Psoas muscle (tissue), 8 donors: ENCODE measurements at regions of chr9 and their contacts with region 1.

Region 1: DNA sequence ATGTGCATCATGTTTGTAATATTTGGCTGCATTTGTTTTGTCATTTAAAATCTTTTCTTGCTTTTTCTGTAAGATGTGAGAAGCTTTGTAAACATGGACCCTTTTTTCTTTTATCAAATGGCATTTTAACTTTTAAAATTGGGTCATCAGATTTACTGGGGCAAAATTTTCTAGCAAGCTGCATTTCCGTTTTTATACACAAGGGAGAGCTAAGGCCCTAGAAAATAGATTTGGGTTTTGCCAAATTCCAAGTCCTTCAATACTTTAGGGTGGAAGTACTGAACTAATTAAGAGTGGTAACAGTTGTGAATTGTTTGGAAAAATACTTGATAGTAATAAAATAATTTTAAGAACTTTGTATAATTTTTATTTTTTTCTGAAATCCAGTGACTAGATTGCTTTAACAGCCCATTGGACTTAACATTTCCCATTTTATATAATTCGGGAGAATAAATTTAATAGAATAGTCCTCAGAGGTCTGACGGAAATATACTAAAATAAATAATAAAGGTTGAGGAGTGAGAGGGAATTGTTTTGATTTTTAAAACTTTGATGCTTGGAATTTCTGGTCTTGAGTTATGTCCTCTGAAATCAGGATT is 117.4 kb downstream of the SMARCA2 start:
- DNase-seq: no peak
- ATAC-seq: peak in 3 of 4 donors; percentile 56 to 78 (median 68)
- H3K4me3 ChIP-seq: no peak overlapping the region
- H3K27ac ChIP-seq: no peak overlapping the region
- H3K4me1 ChIP-seq: peaks cover 28% of the 10 kb centered on the region
- H3K27me3 ChIP-seq: no peaks in the 10 kb centered on the region
- CTCF ChIP-seq: peak; percentile 74

Region 2: DNA sequence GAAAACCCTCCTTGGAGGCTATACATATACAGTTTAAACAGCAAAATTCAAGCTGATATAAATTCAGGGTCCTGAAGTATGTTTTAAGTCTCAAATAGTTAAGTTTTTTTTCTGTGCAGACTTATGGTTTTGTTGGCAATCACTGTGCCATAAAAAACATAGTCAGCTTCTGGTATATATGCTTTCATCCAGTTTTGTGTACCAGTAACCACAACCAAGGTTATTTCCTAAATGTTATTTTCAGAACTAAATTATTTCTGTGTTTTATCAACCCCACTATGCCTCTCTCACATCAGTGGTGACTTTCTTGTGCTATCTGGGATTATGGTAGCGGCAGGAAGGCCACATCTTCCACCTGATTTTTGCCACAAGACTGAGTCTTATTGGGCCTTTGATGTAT is 225.1 kb before region 1 on chr9:
- intact Hi-C with region 1: no loop called
- DNase-seq: no peak
- ATAC-seq: no peak
- H3K4me3 ChIP-seq: no peak overlapping the region
- H3K27ac ChIP-seq: no peak overlapping the region
- H3K4me1 ChIP-seq: no peaks in the 10 kb centered on the region
- H3K27me3 ChIP-seq: no peaks in the 10 kb centered on the region
- CTCF ChIP-seq: no peak

Region 3: GRCh38 chr9:1939926-1940368 is 192.6 kb before region 1 on chr9:
- intact Hi-C with region 1: no loop called
- DNase-seq: no peak
- ATAC-seq: no peak
- H3K4me3 ChIP-seq: no peak overlapping the region
- H3K27ac ChIP-seq: no peak overlapping the region
- H3K4me1 ChIP-seq: no peaks in the 10 kb centered on the region
- H3K27me3 ChIP-seq: no peaks in the 10 kb centered on the region
- CTCF ChIP-seq: peak; percentile 41

Region 4: GRCh38 chr9:2085716-2086115 is 46.9 kb before region 1 on chr9:
- intact Hi-C with region 1: no loop called
- DNase-seq: no peak
- ATAC-seq: peak in 1 of 4 donors; percentile 44
- H3K4me3 ChIP-seq: no peak overlapping the region
- H3K27ac ChIP-seq: no peak overlapping the region
- H3K4me1 ChIP-seq: no peaks in the 10 kb centered on the region
- H3K27me3 ChIP-seq: no peaks in the 10 kb centered on the region
- CTCF ChIP-seq: no peak

Region 5: DNA sequence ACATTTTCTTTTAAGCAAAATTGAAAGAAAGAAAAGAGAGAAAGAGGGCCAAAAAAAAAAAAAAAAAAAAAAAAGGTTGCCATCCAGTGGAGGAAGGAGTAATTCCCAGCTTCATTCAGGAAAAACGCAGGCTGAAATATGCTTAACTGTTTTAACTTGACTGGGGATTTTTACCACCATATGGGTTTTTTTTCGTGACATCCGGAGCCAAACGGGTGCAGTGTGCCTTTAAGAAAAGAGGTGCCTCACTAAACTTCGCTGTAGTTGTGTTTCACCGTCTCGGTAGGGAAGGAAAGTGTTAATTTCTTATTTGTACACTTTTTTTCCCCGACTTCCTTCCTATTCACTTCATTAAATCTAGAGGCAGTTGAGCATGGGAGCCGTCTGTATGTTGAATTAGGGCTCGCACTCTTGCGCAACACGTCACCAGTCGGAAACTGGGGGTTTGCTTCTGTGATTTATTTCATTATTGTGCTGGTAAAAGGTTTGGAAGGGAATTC is 25.6 kb after region 1 on chr9:
- intact Hi-C with region 1: no loop called
- DNase-seq: peak; percentile 40 to 59
- ATAC-seq: peak; percentile 57 to 69 (median 64)
- H3K4me3 ChIP-seq: peak overlapping the region; percentile 72
- H3K27ac ChIP-seq: peak overlapping the region; percentile 83
- H3K4me1 ChIP-seq: peaks cover 24% of the 10 kb centered on the region
- H3K27me3 ChIP-seq: no peaks in the 10 kb centered on the region
- CTCF ChIP-seq: no peak

Region 6: DNA sequence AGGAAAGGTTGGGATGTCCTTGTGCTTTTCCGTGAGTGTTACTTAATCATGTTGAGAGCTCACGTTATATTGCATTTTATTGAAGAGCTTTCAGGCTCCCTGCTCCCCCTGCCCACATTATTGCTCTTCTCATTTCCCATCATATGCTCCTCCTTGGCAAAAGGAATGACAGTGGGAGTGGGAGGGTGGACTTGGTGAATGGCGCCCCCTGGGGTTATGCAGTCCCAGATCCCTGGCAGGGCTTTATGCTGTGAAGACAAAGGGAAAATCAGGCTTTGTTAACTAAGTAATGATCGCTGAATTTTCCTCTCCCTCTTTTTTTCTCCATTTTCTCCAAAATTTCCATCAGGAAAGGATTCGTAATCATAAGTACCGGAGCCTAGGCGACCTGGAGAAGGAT is 49.2 kb after region 1 on chr9:
- intact Hi-C with region 1: loop called (anchors 1 to 2 kb)
- DNase-seq: peak; percentile 27 to 67
- ATAC-seq: peak in 3 of 4 donors; percentile 75 to 87 (median 82)
- H3K4me3 ChIP-seq: no peak overlapping the region
- H3K27ac ChIP-seq: no peak overlapping the region
- H3K4me1 ChIP-seq: peaks cover 10% of the 10 kb centered on the region
- H3K27me3 ChIP-seq: no peaks in the 10 kb centered on the region
- CTCF ChIP-seq: peak; percentile 45

Region 7: GRCh38 chr9:2837915-2838314 is 705.3 kb after region 1 on chr9:
- intact Hi-C with region 1: loop called in 1 of 2 experiments (anchors 10 kb)
- DNase-seq: no peak
- ATAC-seq: peak in 1 of 4 donors; percentile 61
- H3K4me3 ChIP-seq: peak overlapping the region; percentile 26
- H3K27ac ChIP-seq: peak overlapping the region; percentile 24
- H3K4me1 ChIP-seq: peaks cover 49% of the 10 kb centered on the region
- H3K27me3 ChIP-seq: no peaks in the 10 kb centered on the region
- CTCF ChIP-seq: peak; percentile 27